Colonic mucosa (tissue), 4 donors: ENCODE measurements at regions of chr11 and their contacts with region 1.

Region 1: DNA sequence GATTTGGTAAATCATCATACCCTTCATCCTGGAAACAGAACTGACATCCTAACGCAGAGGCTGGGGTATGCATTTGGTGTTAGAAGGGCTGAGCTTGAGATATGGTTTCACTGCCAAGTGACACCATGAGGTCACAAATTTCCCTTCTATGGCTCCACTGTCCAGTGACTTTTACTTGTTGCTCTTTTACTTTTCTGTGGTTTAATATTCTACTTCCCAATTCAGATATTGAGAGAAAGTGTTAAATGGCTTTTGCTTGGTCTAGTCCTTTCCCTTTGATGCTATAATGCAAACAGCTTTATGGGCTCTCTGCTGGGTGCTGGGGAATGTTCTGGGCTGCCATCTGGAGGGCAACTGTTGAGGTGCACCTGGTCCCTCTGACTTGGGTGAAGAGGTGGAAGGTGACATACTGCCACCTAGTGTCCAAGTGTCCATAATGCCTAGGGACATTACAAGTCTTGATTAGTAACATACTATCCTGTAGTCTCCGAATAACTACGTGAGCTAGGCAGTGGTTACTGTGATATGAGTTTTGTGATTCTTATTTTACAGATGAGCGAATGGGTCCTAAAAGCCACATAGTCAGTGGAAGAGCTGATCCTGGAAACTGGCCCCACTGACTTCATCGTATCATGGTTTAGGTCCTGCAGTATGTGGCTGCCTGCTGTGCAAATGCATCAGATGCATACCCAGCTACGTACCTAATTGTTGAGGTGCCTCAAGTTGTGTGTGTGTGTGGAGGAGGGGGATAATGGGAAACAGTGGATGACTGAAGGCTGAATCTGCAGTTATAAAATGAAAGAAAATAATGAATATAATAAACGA is 149.1 kb upstream of the RAG2 start:
- DNase-seq: peak; percentile 93
- H3K4me3 ChIP-seq: no peak overlapping the region
- H3K27ac ChIP-seq: no peak overlapping the region
- H3K4me1 ChIP-seq: no peaks in the 10 kb centered on the region
- H3K27me3 ChIP-seq: no peaks in the 10 kb centered on the region
- CTCF ChIP-seq: peak; percentile 99

Region 2: GRCh38 chr11:36702330-36703055 is 44.6 kb before region 1 on chr11:
- intact Hi-C with region 1: loop called (anchors 2 kb)
- DNase-seq: peak; percentile 38
- H3K4me3 ChIP-seq: no peak overlapping the region
- H3K27ac ChIP-seq: no peak overlapping the region
- H3K4me1 ChIP-seq: peaks cover 3% of the 10 kb centered on the region
- H3K27me3 ChIP-seq: no peaks in the 10 kb centered on the region
- CTCF ChIP-seq: peak; percentile 85